ENCODE measurements at regions of chr22 and their contacts with region 1.

Region 1: GRCh38 chr22:40487663-40488249 is 117.4 kb downstream of the SGSM3 start:
- DNase-seq: no peak
- ATAC-seq: peak; percentile 48; the same call in 2 of the 3 replicates
- H3K4me3 ChIP-seq: no peak overlapping the region
- H3K27ac ChIP-seq: no peak overlapping the region
- H3K4me1 ChIP-seq: peaks cover 11% of the 10 kb centered on the region
- H3K27me3 ChIP-seq: no peaks in the 10 kb centered on the region
- CTCF ChIP-seq: peak; percentile 67 to 82 (median 67)
- EP300 ChIP-seq: no peak
- POLR2A ChIP-seq: no peak
- RAD21 ChIP-seq: peak; percentile 65

Region 2: GRCh38 chr22:40463017-40463631 is 24.6 kb before region 1 on chr22:
- CTCF ChIA-PET with region 1: interaction called, 42 read pairs
- POLR2A ChIA-PET with region 1: no interaction called
- RAD21 ChIA-PET with region 1: interaction called, 3 read pairs
- SMC1A ChIA-PET with region 1: interaction called, 10 read pairs
- in situ Hi-C with region 1: no loop called
- intact Hi-C with region 1: no loop called
- DNase-seq: peak; percentile 33
- ATAC-seq: peak; percentile 93
- H3K4me3 ChIP-seq: peak overlapping the region; percentile 71
- H3K27ac ChIP-seq: peak overlapping the region; percentile 67
- H3K4me1 ChIP-seq: no peaks in the 10 kb centered on the region; the same call in 1 of the 2 replicates
- H3K27me3 ChIP-seq: no peaks in the 10 kb centered on the region
- CTCF ChIP-seq: no peak
- EP300 ChIP-seq: no peak
- POLR2A ChIP-seq: peak; percentile 53
- RAD21 ChIP-seq: no peak

Region 3: GRCh38 chr22:40473703-40474102 is 14.1 kb before region 1 on chr22:
- CTCF ChIA-PET with region 1: interaction called, 16 read pairs
- POLR2A ChIA-PET with region 1: interaction called, 3 read pairs
- RAD21 ChIA-PET with region 1: no interaction called
- SMC1A ChIA-PET with region 1: interaction called, 7 read pairs
- in situ Hi-C with region 1: no loop called
- intact Hi-C with region 1: no loop called
- DNase-seq: no peak
- ATAC-seq: peak; percentile 67
- H3K4me3 ChIP-seq: no peak overlapping the region
- H3K27ac ChIP-seq: no peak overlapping the region
- H3K4me1 ChIP-seq: peaks cover 15% of the 10 kb centered on the region
- H3K27me3 ChIP-seq: no peaks in the 10 kb centered on the region
- CTCF ChIP-seq: no peak
- EP300 ChIP-seq: no peak
- POLR2A ChIP-seq: no peak
- RAD21 ChIP-seq: no peak

Region 4: GRCh38 chr22:40502919-40503318 is 15.2 kb after region 1 on chr22:
- CTCF ChIA-PET with region 1: interaction called, 17 read pairs
- POLR2A ChIA-PET with region 1: interaction called, 4 read pairs
- RAD21 ChIA-PET with region 1: interaction called, 9 read pairs
- SMC1A ChIA-PET with region 1: interaction called, 16 read pairs
- in situ Hi-C with region 1: no loop called
- intact Hi-C with region 1: no loop called
- DNase-seq: no peak
- ATAC-seq: 0 out of 3 replicates have a peak, but pooled peaks have one; percentile 9
- H3K4me3 ChIP-seq: no peak overlapping the region
- H3K27ac ChIP-seq: no peak overlapping the region
- H3K4me1 ChIP-seq: peaks cover 35% of the 10 kb centered on the region
- H3K27me3 ChIP-seq: no peaks in the 10 kb centered on the region
- CTCF ChIP-seq: no peak
- EP300 ChIP-seq: no peak
- POLR2A ChIP-seq: no peak
- RAD21 ChIP-seq: no peak

Region 5: GRCh38 chr22:40509401-40510134 is 21.8 kb after region 1 on chr22:
- CTCF ChIA-PET with region 1: interaction called, 17 read pairs
- POLR2A ChIA-PET with region 1: interaction called, 4 read pairs
- RAD21 ChIA-PET with region 1: interaction called, 9 read pairs
- SMC1A ChIA-PET with region 1: interaction called, 18 read pairs
- in situ Hi-C with region 1: no loop called
- intact Hi-C with region 1: no loop called
- DNase-seq: no peak
- ATAC-seq: peak; percentile 73
- H3K4me3 ChIP-seq: no peak overlapping the region
- H3K27ac ChIP-seq: peak overlapping the region; percentile 10
- H3K4me1 ChIP-seq: peaks cover 10% of the 10 kb centered on the region
- H3K27me3 ChIP-seq: no peaks in the 10 kb centered on the region
- CTCF ChIP-seq: no peak
- EP300 ChIP-seq: no peak
- POLR2A ChIP-seq: no peak
- RAD21 ChIP-seq: no peak

Region 6: GRCh38 chr22:40541300-40541699 is 53.5 kb after region 1 on chr22:
- CTCF ChIA-PET with region 1: no interaction called
- POLR2A ChIA-PET with region 1: no interaction called
- RAD21 ChIA-PET with region 1: no interaction called
- SMC1A ChIA-PET with region 1: no interaction called
- in situ Hi-C with region 1: no loop called
- intact Hi-C with region 1: no loop called
- DNase-seq: peak; percentile 54
- ATAC-seq: peak; percentile 91
- H3K4me3 ChIP-seq: no peak overlapping the region
- H3K27ac ChIP-seq: no peak overlapping the region
- H3K4me1 ChIP-seq: peaks cover 7% of the 10 kb centered on the region
- H3K27me3 ChIP-seq: no peaks in the 10 kb centered on the region
- CTCF ChIP-seq: no peak
- EP300 ChIP-seq: no peak
- POLR2A ChIP-seq: no peak
- RAD21 ChIP-seq: no peak

Measured in GM12878 (cell line).